Psoas muscle (tissue), 8 donors: ENCODE measurements at regions of chr9 and their contacts with region 1.

Region 1: DNA sequence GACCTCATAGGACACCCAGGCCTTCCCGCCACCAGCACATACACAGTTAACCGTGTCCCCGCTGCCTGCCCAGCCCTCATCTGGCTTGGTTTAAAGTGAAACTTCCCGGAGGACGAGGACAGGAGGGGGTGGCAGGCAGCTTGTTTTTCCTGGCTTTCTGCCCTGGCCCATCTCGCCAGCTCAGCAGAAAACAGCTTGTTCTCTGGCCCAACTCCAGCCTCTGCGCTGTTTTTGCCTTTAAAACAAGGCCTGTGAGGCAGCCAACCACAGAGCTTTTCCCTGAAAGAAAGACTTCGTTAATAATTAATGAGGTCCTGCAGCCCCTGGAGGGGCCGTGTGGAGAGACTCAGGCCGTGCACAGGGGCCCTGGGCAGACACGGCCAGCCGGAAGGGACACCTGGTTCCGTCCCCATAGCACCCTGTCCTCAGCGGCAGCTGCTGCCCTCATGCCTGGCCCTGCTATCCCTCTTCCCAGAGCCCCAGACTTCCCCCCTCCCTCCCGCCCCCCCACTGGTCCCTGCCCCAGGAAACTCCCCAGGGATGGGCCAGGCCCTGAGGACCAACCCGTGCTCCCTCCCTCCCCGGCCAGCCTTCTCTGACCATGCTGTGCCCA is 108.7 kb downstream of the RXRA start:
- DNase-seq: peak; percentile 95 to 98
- ATAC-seq: peak; percentile 66 to 76 (median 70)
- H3K4me3 ChIP-seq: peak overlapping the region; percentile 34
- H3K27ac ChIP-seq: peak overlapping the region; percentile 87
- H3K4me1 ChIP-seq: peaks cover 95% of the 10 kb centered on the region
- H3K27me3 ChIP-seq: no peaks in the 10 kb centered on the region
- CTCF ChIP-seq: no peak

Region 2: GRCh38 chr9:134267881-134268724 is 166.9 kb before region 1 on chr9:
- intact Hi-C with region 1: loop called in 1 of 2 experiments (anchors 10 kb)
- DNase-seq: no peak
- ATAC-seq: peak; percentile 63 to 81 (median 74)
- H3K4me3 ChIP-seq: no peak overlapping the region
- H3K27ac ChIP-seq: peak overlapping the region; percentile 67
- H3K4me1 ChIP-seq: peaks cover 13% of the 10 kb centered on the region
- H3K27me3 ChIP-seq: peaks cover 0 to 2% (median 0%) of the 10 kb centered on the region in 3 donors
- CTCF ChIP-seq: no peak

Region 3: GRCh38 chr9:134325817-134326723 is 108.9 kb before region 1 on chr9 and contains the start of gene RXRA:
- intact Hi-C with region 1: loop called (anchors 2 to 5 kb)
- DNase-seq: peak; percentile 90 to 95
- ATAC-seq: peak; percentile 54 to 58 (median 56)
- H3K4me3 ChIP-seq: peak within 1 kb of the TSS; percentile 92
- H3K27ac ChIP-seq: peak within 1 kb of the TSS; percentile 98
- H3K4me1 ChIP-seq: peaks cover 39% of the 10 kb centered on the region
- H3K27me3 ChIP-seq: no peaks in the 10 kb centered on the region
- CTCF ChIP-seq: no peak
- total RNA-seq, gene RXRA: 84.3 to 192 (median 147) TPM

Region 4: GRCh38 chr9:134333234-134333873 is 101.6 kb before region 1 on chr9:
- intact Hi-C with region 1: loop called (anchors 2 to 5 kb)
- DNase-seq: peak; percentile 50 to 62
- ATAC-seq: no peak
- H3K4me3 ChIP-seq: peak overlapping the region; percentile 1
- H3K27ac ChIP-seq: peak overlapping the region; percentile 97
- H3K4me1 ChIP-seq: peaks cover 87% of the 10 kb centered on the region
- H3K27me3 ChIP-seq: no peaks in the 10 kb centered on the region
- CTCF ChIP-seq: no peak

Region 5: DNA sequence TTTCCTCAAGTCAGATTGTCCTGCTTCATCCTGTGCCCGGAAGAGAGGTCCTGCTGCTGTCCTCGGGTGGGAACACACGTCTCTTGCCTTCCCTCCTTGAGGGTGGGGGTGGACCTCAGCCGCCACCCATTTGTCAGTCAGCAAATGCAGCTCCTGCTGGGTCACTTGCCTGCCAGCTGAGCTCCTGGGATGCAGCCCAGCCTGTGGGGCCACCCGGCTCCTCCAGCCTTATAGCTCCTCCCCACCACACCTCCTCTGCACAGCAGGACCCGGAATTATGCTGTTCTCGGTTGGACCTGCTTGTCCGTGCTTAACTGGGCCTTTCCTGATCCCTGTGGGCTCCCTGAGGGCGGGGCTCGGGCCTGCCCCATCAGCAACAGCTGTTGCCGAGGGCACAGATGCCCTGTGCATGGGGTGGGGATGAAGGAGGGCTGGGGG is 56.1 kb before region 1 on chr9:
- intact Hi-C with region 1: loop called in 1 of 2 experiments (anchors 2 kb)
- DNase-seq: peak; percentile 82 to 87
- ATAC-seq: peak; percentile 29 to 53 (median 41)
- H3K4me3 ChIP-seq: peak overlapping the region; percentile 49
- H3K27ac ChIP-seq: peak overlapping the region; percentile 92
- H3K4me1 ChIP-seq: peaks cover 100% of the 10 kb centered on the region
- H3K27me3 ChIP-seq: no peaks in the 10 kb centered on the region
- CTCF ChIP-seq: no peak